ENCODE measurements at regions of chr2 and their contacts with region 1.

Region 1: GRCh38 chr2:99180755-99181623 is at the starts of genes MITD1 and MRPL30:
- DNase-seq: peak; percentile 94
- ATAC-seq: peak; percentile 91
- H3K4me3 Mint-ChIP-seq: peak within 1 kb of the TSS; percentile 97
- H3K27ac Mint-ChIP-seq: peak within 1 kb of the TSS; percentile 92
- H3K4me1 Mint-ChIP-seq: peaks cover 41% of the 10 kb centered on the region
- H3K27me3 Mint-ChIP-seq: no peaks in the 10 kb centered on the region
- total RNA-seq, gene MITD1: 51.3 to 53.3 TPM
- total RNA-seq, gene MRPL30: 23.3 to 24.4 TPM

Region 2: GRCh38 chr2:99141110-99142108 is 39.6 kb before region 1 on chr2 and contains the start of gene C2orf15:
- CTCF ChIA-PET with region 1: interaction called, 5 read pairs
- POLR2A ChIA-PET with region 1: interaction called, 13 read pairs
- DNase-seq: peak; percentile 96
- ATAC-seq: peak; percentile 93
- H3K4me3 Mint-ChIP-seq: peak within 1 kb of the TSS; percentile 94
- H3K27ac Mint-ChIP-seq: peak within 1 kb of the TSS; percentile 94
- H3K4me1 Mint-ChIP-seq: peaks cover 21% of the 10 kb centered on the region
- H3K27me3 Mint-ChIP-seq: peaks cover 2% of the 10 kb centered on the region
- total RNA-seq, gene C2orf15: 0.37 to 0.86 TPM

Measured in activated CD8-positive, alpha-beta T cell treated with anti-CD3 and anti-CD28 coated beads, Interleukin-2, amount 10 ng/mL, durations not matched to agents 7 days and 5 days (primary cell).